Gastrocnemius medialis (tissue), 4 donors: ENCODE measurements at regions of chr5 and their contacts with region 1.

Region 1: GRCh38 chr5:32232441-32233219 is 58.5 kb upstream of the GOLPH3 start:
- DNase-seq: peak; percentile 53 to 73
- ATAC-seq: peak; percentile 79 to 94
- H3K4me3 ChIP-seq: no peak overlapping the region
- H3K27ac ChIP-seq: peak overlapping the region; percentile 30 to 62 (median 47)
- H3K4me1 ChIP-seq: peaks cover 19 to 29% of the 10 kb centered on the region in 2 donors
- H3K27me3 ChIP-seq: no peaks in the 10 kb centered on the region
- CTCF ChIP-seq: peak; percentile 69 to 86 (median 81)
- POLR2A ChIP-seq: no peak

Region 2: DNA sequence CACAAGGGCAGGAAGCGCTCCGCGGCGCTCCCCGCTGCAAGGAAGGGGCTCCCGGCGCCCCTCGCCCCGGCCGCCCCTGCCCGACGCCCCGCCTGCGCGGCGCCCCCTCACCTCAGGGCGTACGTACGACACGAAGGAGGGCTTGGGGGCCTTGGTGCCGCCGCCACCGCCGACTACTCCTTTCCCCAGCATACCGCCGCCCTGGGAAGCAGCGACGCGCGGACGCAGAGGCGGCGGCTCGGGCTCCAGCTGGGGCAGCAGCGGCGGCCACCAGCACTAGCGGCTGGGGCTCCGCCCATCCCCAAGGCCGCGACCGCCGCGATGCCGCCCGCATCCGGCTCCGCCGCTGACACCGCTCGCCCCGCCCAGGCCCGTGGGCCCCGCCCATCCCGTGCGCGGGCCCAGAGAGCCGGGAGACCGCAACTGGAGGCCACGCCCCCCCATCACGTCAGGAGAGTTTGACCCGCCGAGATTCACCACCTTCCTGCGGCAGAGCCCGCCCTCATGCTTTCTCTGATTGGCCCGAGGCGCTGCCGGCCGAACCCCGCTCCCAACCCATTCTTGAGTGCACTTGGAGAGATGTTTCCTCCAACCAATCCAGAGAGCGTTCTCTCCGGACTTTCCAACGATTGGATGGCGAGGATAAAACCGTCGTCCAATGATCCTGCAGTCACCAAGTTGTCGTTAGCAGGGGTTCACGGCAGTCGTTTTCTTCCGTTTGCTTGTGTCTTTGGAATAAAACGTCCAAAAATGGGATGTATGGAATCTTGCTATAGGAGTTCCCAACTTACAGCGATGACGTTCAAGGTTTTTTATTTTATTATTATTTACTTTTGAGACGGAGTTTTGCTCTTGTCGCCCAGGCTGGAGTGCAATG is 80.3 kb after region 1 on chr5 and contains the start of gene MTMR12:
- in situ Hi-C with region 1: no loop called
- intact Hi-C with region 1: loop called (anchors 5 kb)
- DNase-seq: peak; percentile 99
- ATAC-seq: peak; percentile 97 to 98
- H3K4me3 ChIP-seq: peak within 1 kb of the TSS; percentile 69 to 88 (median 82)
- H3K27ac ChIP-seq: peak within 1 kb of the TSS; percentile 85 to 98 (median 92)
- H3K4me1 ChIP-seq: peaks cover 10 to 33% of the 10 kb centered on the region in 2 donors
- H3K27me3 ChIP-seq: no peaks in the 10 kb centered on the region
- CTCF ChIP-seq: no peak
- POLR2A ChIP-seq: peak; percentile 88 to 91
- total RNA-seq, gene MTMR12: 6.4 to 11.5 (median 10.6) TPM

Region 3: GRCh38 chr5:32323741-32324140 is 91.1 kb after region 1 on chr5:
- in situ Hi-C with region 1: loop called (anchors 5 to 25 kb)
- intact Hi-C with region 1: no loop called
- DNase-seq: no peak
- ATAC-seq: no peak
- H3K4me3 ChIP-seq: no peak overlapping the region
- H3K27ac ChIP-seq: no peak overlapping the region
- H3K4me1 ChIP-seq: no peaks in the 10 kb centered on the region
- H3K27me3 ChIP-seq: no peaks in the 10 kb centered on the region
- CTCF ChIP-seq: no peak
- POLR2A ChIP-seq: no peak

Region 4: GRCh38 chr5:32329308-32329834 is 96.7 kb after region 1 on chr5:
- in situ Hi-C with region 1: loop called (anchors 5 to 25 kb)
- intact Hi-C with region 1: loop called (anchors 1 kb)
- DNase-seq: peak; percentile 28 to 46
- ATAC-seq: peak; percentile 90 to 92
- H3K4me3 ChIP-seq: no peak overlapping the region
- H3K27ac ChIP-seq: no peak overlapping the region
- H3K4me1 ChIP-seq: no peaks in the 10 kb centered on the region
- H3K27me3 ChIP-seq: no peaks in the 10 kb centered on the region
- CTCF ChIP-seq: peak; percentile 29 to 73 (median 60)
- POLR2A ChIP-seq: no peak

Region 5: GRCh38 chr5:32444431-32445286 is 212.0 kb after region 1 on chr5 and contains the start of gene ZFR:
- in situ Hi-C with region 1: loop called in 1 of 4 experiments (anchors 25 kb)
- intact Hi-C with region 1: loop called (anchors 10 kb)
- DNase-seq: peak; percentile 88 to 92
- ATAC-seq: peak; percentile 90 to 94
- H3K4me3 ChIP-seq: peak within 1 kb of the TSS; percentile 68 to 88 (median 76)
- H3K27ac ChIP-seq: peak within 1 kb of the TSS; percentile 89 to 97 (median 92)
- H3K4me1 ChIP-seq: peaks cover 26 to 34% of the 10 kb centered on the region in 2 donors
- H3K27me3 ChIP-seq: no peaks in the 10 kb centered on the region
- CTCF ChIP-seq: no peak
- POLR2A ChIP-seq: peak; percentile 85 to 86
- total RNA-seq, gene ZFR: 84.0 to 109 (median 89.4) TPM

Region 6: GRCh38 chr5:32613050-32613672 is 380.5 kb after region 1 on chr5:
- in situ Hi-C with region 1: loop called in 1 of 4 experiments (anchors 25 kb)
- intact Hi-C with region 1: loop called (anchors 5 kb)
- DNase-seq: peak; percentile 58 to 74
- ATAC-seq: peak; percentile 82 to 86
- H3K4me3 ChIP-seq: no peak overlapping the region
- H3K27ac ChIP-seq: no peak overlapping the region
- H3K4me1 ChIP-seq: peaks cover 9 to 10% of the 10 kb centered on the region in 2 donors
- H3K27me3 ChIP-seq: no peaks in the 10 kb centered on the region
- CTCF ChIP-seq: peak; percentile 79 to 93 (median 89)
- POLR2A ChIP-seq: no peak